K562 (cell line): ENCODE measurements at regions of chr3 and their contacts with region 1.

Region 1: GRCh38 chr3:112136959-112137693 is 4.1 kb upstream of the GCSAM start:
- DNase-seq: peak in 2 of 4 experiments; percentile 8 to 42
- ATAC-seq: peak; percentile 72
- H3K4me3 ChIP-seq: no peak overlapping the region
- H3K27ac ChIP-seq: no peak overlapping the region
- H3K4me1 ChIP-seq: peaks cover 0 to 7% of the 10 kb centered on the region in 2 experiments; a peak in 1 of 5 replicates
- H3K27me3 ChIP-seq: no peaks in the 10 kb centered on the region
- CTCF ChIP-seq: peak; percentile 34 to 64 (median 51); a peak in 5 of 6 replicates
- EP300 ChIP-seq: no peak
- POLR2A ChIP-seq: no peak
- RAD21 ChIP-seq: peak in 1 of 2 experiments; percentile 63; a peak in 3 of 4 replicates

Region 2: GRCh38 chr3:112086076-112086854 is 50.9 kb before region 1 on chr3 and contains the start of gene C3orf52:
- CTCF ChIA-PET with region 1: no interaction called
- POLR2A ChIA-PET with region 1: no interaction called
- in situ Hi-C with region 1: no loop called
- intact Hi-C with region 1: no loop called
- DNase-seq: peak; percentile 80 to 88 (median 86)
- ATAC-seq: peak; percentile 98
- H3K4me3 ChIP-seq: peak within 1 kb of the TSS; percentile 45
- H3K27ac ChIP-seq: peak within 1 kb of the TSS; percentile 65
- H3K4me1 ChIP-seq: peaks cover 5 to 13% of the 10 kb centered on the region in 2 experiments; a peak in 4 of 5 replicates
- H3K27me3 ChIP-seq: no peaks in the 10 kb centered on the region
- CTCF ChIP-seq: 0 out of 6 replicates have a peak, but pooled peaks of 1 of the 3 experiments have one; percentile 3
- EP300 ChIP-seq: no peak
- POLR2A ChIP-seq: peak; percentile 68
- RAD21 ChIP-seq: no peak
- polyA plus RNA-seq, gene C3orf52: 5.5 to 5.6 TPM

Region 3: DNA sequence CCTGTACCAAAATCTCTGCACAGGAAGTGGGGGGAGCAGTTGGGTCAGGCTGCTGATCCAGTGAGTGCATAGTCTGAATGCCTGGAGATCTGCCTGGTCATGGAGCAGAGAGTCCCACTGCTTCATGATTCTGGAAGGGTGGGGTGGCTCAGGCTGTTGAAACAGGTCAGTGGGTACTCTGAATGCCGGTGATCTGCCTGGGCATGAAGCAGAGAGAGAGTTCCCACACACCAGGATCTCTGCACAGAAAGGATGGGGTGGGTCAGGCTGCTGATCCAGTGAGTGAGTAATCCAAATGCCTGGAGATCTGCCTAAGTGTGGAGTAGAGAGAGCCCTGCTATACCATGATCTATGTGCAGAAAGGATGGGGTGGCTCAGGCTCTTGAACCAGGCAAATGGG is 12.0 kb after region 1 on chr3:
- CTCF ChIA-PET with region 1: no interaction called
- POLR2A ChIA-PET with region 1: no interaction called
- in situ Hi-C with region 1: no loop called
- intact Hi-C with region 1: no loop called
- DNase-seq: no peak
- ATAC-seq: no peak
- H3K4me3 ChIP-seq: no peak overlapping the region
- H3K27ac ChIP-seq: no peak overlapping the region
- H3K4me1 ChIP-seq: no peaks in the 10 kb centered on the region
- H3K27me3 ChIP-seq: no peaks in the 10 kb centered on the region
- CTCF ChIP-seq: no peak
- EP300 ChIP-seq: no peak
- POLR2A ChIP-seq: no peak
- RAD21 ChIP-seq: no peak

Region 4: DNA sequence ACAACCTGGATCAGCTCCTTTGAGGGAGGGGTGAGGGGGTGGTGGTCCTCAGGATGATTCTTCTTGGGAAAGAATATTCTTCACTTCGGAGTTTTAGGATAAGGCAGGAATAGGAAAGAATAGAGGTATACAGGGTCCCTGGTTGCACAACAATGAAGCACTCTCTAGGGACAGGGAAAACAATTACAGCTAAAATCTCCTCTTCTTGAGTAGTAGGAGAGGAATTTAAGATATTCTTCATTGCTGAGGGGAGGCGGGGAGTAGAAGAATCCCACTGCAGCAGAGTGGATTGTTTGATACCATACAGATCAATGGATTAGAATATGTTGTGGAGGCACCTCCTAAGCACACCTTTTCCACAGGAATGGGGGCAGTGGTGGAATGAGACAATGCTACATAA is 136.4 kb after region 1 on chr3:
- CTCF ChIA-PET with region 1: no interaction called
- POLR2A ChIA-PET with region 1: no interaction called
- in situ Hi-C with region 1: no loop called
- intact Hi-C with region 1: loop called (anchors 10 kb)
- DNase-seq: no peak
- ATAC-seq: no peak
- H3K4me3 ChIP-seq: no peak overlapping the region
- H3K27ac ChIP-seq: no peak overlapping the region
- H3K4me1 ChIP-seq: no peaks in the 10 kb centered on the region
- H3K27me3 ChIP-seq: no peaks in the 10 kb centered on the region
- CTCF ChIP-seq: no peak
- EP300 ChIP-seq: no peak
- POLR2A ChIP-seq: no peak
- RAD21 ChIP-seq: no peak